Activated CD8-positive, alpha-beta T cell treated with anti-CD3 and anti-CD28 coated beads for 36 hours (primary cell): ENCODE measurements at regions of chr17 and their contacts with region 1.

Region 1: DNA sequence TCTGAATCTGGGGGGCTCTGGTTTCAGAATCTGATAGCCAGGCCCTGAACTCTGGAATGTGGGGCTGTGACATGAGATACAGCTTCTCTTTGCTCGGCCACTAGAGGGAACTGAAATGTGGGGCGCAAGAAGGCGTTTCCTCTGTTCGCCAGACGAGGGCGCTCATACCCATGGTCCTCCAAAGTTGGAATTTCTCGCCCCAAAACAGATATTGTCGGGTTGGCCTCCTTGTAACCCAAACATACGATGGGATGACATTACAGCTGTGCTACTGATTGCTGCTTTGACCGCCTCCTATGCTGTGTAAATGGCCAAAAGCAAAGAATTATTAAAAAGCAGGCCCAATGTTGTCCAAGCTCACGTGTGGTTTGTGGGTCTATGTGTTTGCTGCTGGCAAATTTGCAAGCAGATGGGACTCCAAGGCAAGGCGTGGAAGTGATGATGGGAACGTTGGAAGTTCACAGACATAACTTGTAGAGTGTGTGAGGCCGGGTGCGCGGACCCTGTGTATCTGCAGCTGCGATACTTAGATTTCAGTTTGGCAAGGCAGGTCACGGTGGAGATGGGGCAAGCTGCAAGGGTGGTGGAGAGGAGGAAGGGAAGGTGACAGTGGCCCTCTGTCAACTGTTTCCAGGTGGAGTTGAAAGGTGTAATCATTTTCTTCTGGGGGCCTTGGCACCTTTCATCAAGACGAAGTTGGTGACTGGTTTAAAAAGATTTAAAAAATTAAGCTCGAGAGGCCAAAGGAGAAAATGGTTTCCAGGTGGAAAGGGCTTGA is 13.0 kb upstream of the MSI2 start:
- DNase-seq: peak; percentile 82
- ATAC-seq: peak; percentile 94
- H3K4me3 Mint-ChIP-seq: no peak overlapping the region
- H3K27ac Mint-ChIP-seq: peak overlapping the region; percentile 40
- H3K4me1 Mint-ChIP-seq: peaks cover 3% of the 10 kb centered on the region
- H3K27me3 Mint-ChIP-seq: peaks cover 2% of the 10 kb centered on the region
- CTCF ChIP-seq: peak; percentile 100

Region 2: GRCh38 chr17:56948491-56948890 is 294.9 kb before region 1 on chr17:
- CTCF ChIA-PET with region 1: no interaction called
- POLR2A ChIA-PET with region 1: no interaction called
- intact Hi-C with region 1: no loop called
- DNase-seq: no peak
- ATAC-seq: no peak
- H3K4me3 Mint-ChIP-seq: no peak overlapping the region
- H3K27ac Mint-ChIP-seq: no peak overlapping the region
- H3K4me1 Mint-ChIP-seq: peaks cover 10% of the 10 kb centered on the region
- H3K27me3 Mint-ChIP-seq: no peaks in the 10 kb centered on the region
- CTCF ChIP-seq: no peak

Region 3: DNA sequence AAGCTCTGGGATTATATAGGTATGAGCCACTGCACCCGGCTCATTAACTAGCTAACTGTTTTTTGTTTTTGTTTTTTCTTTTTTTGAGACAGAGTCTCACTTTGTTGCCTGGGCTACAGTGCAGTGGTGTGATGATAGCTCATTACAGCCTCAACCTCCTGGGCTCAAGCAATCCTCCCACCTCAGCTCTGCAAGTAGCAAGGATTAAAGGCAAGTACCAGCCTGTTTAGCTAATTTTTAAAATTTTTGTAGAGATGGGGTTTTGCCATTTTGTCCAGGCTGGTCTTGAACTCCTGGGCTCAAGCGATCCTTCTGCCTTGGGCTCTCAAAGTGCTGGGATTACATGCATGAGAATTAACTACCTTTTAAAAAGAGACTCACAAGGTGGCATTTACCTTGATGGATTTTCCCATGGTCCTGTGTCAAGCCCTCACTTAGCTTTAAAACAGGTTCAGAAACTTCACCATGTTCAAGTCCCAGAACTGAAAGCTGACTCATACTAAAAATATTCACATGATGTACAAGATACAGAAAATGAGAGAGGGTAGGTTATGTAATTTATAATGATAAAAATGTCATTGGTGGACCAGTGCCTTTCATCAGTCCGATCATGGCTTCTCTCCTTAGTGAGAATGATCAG is 162.8 kb before region 1 on chr17:
- CTCF ChIA-PET with region 1: no interaction called
- POLR2A ChIA-PET with region 1: no interaction called
- intact Hi-C with region 1: no loop called
- DNase-seq: no peak
- ATAC-seq: no peak
- H3K4me3 Mint-ChIP-seq: no peak overlapping the region
- H3K27ac Mint-ChIP-seq: no peak overlapping the region
- H3K4me1 Mint-ChIP-seq: peaks cover 21% of the 10 kb centered on the region
- H3K27me3 Mint-ChIP-seq: peaks cover 2% of the 10 kb centered on the region
- CTCF ChIP-seq: no peak

Region 4: GRCh38 chr17:57099165-57099564 is 144.2 kb before region 1 on chr17:
- CTCF ChIA-PET with region 1: no interaction called
- POLR2A ChIA-PET with region 1: no interaction called
- intact Hi-C with region 1: no loop called
- DNase-seq: no peak
- ATAC-seq: no peak
- H3K4me3 Mint-ChIP-seq: no peak overlapping the region
- H3K27ac Mint-ChIP-seq: no peak overlapping the region
- H3K4me1 Mint-ChIP-seq: peaks cover 24% of the 10 kb centered on the region
- H3K27me3 Mint-ChIP-seq: no peaks in the 10 kb centered on the region
- CTCF ChIP-seq: no peak

Region 5: DNA sequence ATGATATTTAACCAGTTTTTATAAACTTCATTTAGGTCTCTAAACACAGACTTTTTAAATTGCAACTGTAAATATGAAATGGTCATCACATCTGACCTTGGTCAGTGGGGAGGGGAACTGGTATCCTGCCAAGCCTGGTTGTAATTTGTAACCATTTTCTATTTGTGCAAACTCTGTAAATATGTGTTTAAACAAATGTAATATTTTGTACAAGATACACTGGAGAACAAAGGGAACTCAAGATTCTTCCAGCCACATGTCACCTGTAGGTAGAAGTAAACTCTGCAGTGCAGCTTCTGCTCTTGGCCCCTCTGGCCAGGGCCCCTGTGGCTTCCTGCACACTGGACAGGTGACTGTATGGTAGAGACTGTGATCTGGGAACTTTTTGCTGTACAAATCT is 122.5 kb before region 1 on chr17:
- CTCF ChIA-PET with region 1: no interaction called
- POLR2A ChIA-PET with region 1: no interaction called
- intact Hi-C with region 1: no loop called
- DNase-seq: no peak
- ATAC-seq: no peak
- H3K4me3 Mint-ChIP-seq: no peak overlapping the region
- H3K27ac Mint-ChIP-seq: no peak overlapping the region
- H3K4me1 Mint-ChIP-seq: no peaks in the 10 kb centered on the region
- H3K27me3 Mint-ChIP-seq: no peaks in the 10 kb centered on the region
- CTCF ChIP-seq: no peak

Region 6: GRCh38 chr17:57264719-57265118 is 21.4 kb after region 1 on chr17:
- CTCF ChIA-PET with region 1: interaction called, 54 read pairs
- POLR2A ChIA-PET with region 1: no interaction called
- intact Hi-C with region 1: no loop called
- DNase-seq: no peak
- ATAC-seq: no peak
- H3K4me3 Mint-ChIP-seq: no peak overlapping the region
- H3K27ac Mint-ChIP-seq: no peak overlapping the region
- H3K4me1 Mint-ChIP-seq: peaks cover 59% of the 10 kb centered on the region
- H3K27me3 Mint-ChIP-seq: no peaks in the 10 kb centered on the region
- CTCF ChIP-seq: no peak

Region 7: GRCh38 chr17:57360266-57360665 is 116.9 kb after region 1 on chr17:
- CTCF ChIA-PET with region 1: interaction called, 13 read pairs
- POLR2A ChIA-PET with region 1: no interaction called
- intact Hi-C with region 1: no loop called
- DNase-seq: no peak
- ATAC-seq: no peak
- H3K4me3 Mint-ChIP-seq: no peak overlapping the region
- H3K27ac Mint-ChIP-seq: no peak overlapping the region
- H3K4me1 Mint-ChIP-seq: peaks cover 35% of the 10 kb centered on the region
- H3K27me3 Mint-ChIP-seq: no peaks in the 10 kb centered on the region
- CTCF ChIP-seq: no peak

Region 8: DNA sequence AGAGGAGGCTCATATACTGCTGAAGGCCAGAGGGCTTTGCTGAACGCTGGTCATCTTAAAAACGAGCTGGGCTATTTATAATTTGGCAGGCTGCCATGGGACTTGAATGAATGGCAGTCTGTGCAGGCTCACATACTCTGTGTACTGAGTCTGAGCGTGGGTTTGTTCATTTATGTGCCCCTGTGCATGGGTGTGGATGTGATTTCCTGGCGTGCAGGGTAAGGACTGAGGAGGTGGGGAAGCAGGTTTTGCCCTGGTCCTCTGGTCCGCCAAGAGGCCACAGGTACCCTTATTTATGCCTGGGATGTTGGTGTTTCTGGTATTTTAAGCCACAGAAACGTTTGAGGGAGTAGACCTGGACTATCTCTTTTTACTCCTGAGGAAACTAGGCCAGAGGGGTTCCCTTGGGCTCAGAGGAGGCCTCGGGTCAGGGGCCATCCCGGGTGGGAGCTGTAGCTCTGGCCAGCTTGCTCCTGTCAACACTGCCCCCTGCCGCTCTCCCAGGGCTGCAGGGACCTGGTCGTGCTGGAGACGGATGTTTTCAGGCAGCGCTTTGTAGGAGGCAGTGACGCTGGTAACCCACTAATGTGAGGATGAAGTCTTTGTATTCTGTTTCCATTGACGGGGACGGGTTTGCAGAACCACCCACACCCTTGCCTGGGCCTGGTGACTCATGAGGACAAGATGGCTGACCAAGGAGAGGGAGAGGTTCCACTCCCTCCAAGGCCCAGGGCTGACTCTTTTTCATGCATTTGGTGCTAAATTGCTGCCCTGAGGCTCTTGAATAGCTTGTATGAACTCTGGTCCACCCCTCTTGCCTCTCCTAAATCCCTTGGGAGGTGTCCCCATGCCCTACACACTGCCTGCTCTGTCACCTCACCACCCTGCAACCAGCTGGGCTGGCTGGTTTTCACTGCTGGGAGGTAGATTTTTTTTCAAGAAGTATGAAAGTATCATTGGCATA is 197.4 kb after region 1 on chr17:
- CTCF ChIA-PET with region 1: interaction called, 39 read pairs
- POLR2A ChIA-PET with region 1: no interaction called
- intact Hi-C with region 1: loop called (anchors 5 kb)
- DNase-seq: peak; percentile 95
- ATAC-seq: peak; percentile 86
- H3K4me3 Mint-ChIP-seq: peak overlapping the region; percentile 50
- H3K27ac Mint-ChIP-seq: peak overlapping the region; percentile 97
- H3K4me1 Mint-ChIP-seq: peaks cover 57% of the 10 kb centered on the region
- H3K27me3 Mint-ChIP-seq: no peaks in the 10 kb centered on the region
- CTCF ChIP-seq: peak; percentile 76

Region 9: GRCh38 chr17:57535249-57535966 is 292.0 kb after region 1 on chr17:
- CTCF ChIA-PET with region 1: interaction called, 13 read pairs
- POLR2A ChIA-PET with region 1: no interaction called
- intact Hi-C with region 1: no loop called
- DNase-seq: no peak
- ATAC-seq: no peak
- H3K4me3 Mint-ChIP-seq: no peak overlapping the region
- H3K27ac Mint-ChIP-seq: no peak overlapping the region
- H3K4me1 Mint-ChIP-seq: peaks cover 53% of the 10 kb centered on the region
- H3K27me3 Mint-ChIP-seq: no peaks in the 10 kb centered on the region
- CTCF ChIP-seq: no peak

Region 10: GRCh38 chr17:57671667-57672632 is 428.6 kb after region 1 on chr17:
- CTCF ChIA-PET with region 1: interaction called, 46 read pairs
- POLR2A ChIA-PET with region 1: no interaction called
- intact Hi-C with region 1: loop called (anchors 10 kb)
- DNase-seq: peak; percentile 82
- ATAC-seq: peak; percentile 87
- H3K4me3 Mint-ChIP-seq: no peak overlapping the region
- H3K27ac Mint-ChIP-seq: peak overlapping the region; percentile 86
- H3K4me1 Mint-ChIP-seq: peaks cover 37% of the 10 kb centered on the region
- H3K27me3 Mint-ChIP-seq: no peaks in the 10 kb centered on the region
- CTCF ChIP-seq: peak; percentile 94

Region 11: GRCh38 chr17:57833179-57833939 is 590.0 kb after region 1 on chr17:
- CTCF ChIA-PET with region 1: interaction called, 22 read pairs
- POLR2A ChIA-PET with region 1: no interaction called
- intact Hi-C with region 1: no loop called
- DNase-seq: peak; percentile 84
- ATAC-seq: peak; percentile 75
- H3K4me3 Mint-ChIP-seq: no peak overlapping the region
- H3K27ac Mint-ChIP-seq: no peak overlapping the region
- H3K4me1 Mint-ChIP-seq: peaks cover 8% of the 10 kb centered on the region
- H3K27me3 Mint-ChIP-seq: no peaks in the 10 kb centered on the region
- CTCF ChIP-seq: peak; percentile 92